ENCODE measurements at regions of chr22 and their contacts with region 1.

Region 1: GRCh38 chr22:50525390-50526068 is at the start of gene SCO2:
- DNase-seq: peak; percentile 95 to 99 (median 98)
- ATAC-seq: peak; percentile 71 to 79
- H3K4me3 Mint-ChIP-seq: peak within 1 kb of the TSS; percentile 72 to 91 (median 86)
- H3K27ac Mint-ChIP-seq: peak within 1 kb of the TSS; percentile 70 to 94 (median 88)
- H3K4me1 Mint-ChIP-seq: peaks cover 18 to 41% (median 33%) of the 10 kb centered on the region in 4 donors
- H3K27me3 Mint-ChIP-seq: peaks cover 0 to under 1% (median 0%) of the 10 kb centered on the region in 5 donors
- polyA plus RNA-seq, gene SCO2: 4.0 to 8.3 (median 6.8) TPM

Region 2: GRCh38 chr22:50399751-50400331 is 125.7 kb before region 1 on chr22:
- POLR2A ChIA-PET with region 1: no interaction called
- DNase-seq: peak in 3 of 10 donors; percentile 4 to 14 (median 12)
- ATAC-seq: peak; percentile 33 to 44
- H3K4me3 Mint-ChIP-seq: peak overlapping the region in 3 of 10 donors; percentile 6 to 41 (median 24)
- H3K27ac Mint-ChIP-seq: peak overlapping the region; percentile 68 to 90 (median 84)
- H3K4me1 Mint-ChIP-seq: peaks cover 21 to 50% (median 42%) of the 10 kb centered on the region in 4 donors
- H3K27me3 Mint-ChIP-seq: no peaks in the 10 kb centered on the region

Region 3: GRCh38 chr22:50444663-50445062 is 80.9 kb before region 1 on chr22:
- POLR2A ChIA-PET with region 1: interaction called, 15 read pairs
- DNase-seq: peak in 1 of 10 donors; percentile 35
- ATAC-seq: peak in 1 of 2 donors; percentile 15
- H3K4me3 Mint-ChIP-seq: peak overlapping the region in 8 of 10 donors; percentile 53 to 76 (median 72)
- H3K27ac Mint-ChIP-seq: peak overlapping the region; percentile 75 to 97 (median 92)
- H3K4me1 Mint-ChIP-seq: peaks cover 23 to 57% (median 40%) of the 10 kb centered on the region in 4 donors
- H3K27me3 Mint-ChIP-seq: no peaks in the 10 kb centered on the region

Region 4: GRCh38 chr22:50507991-50508884 is 17.3 kb before region 1 on chr22 and contains the start of gene NCAPH2:
- POLR2A ChIA-PET with region 1: interaction called, 128 read pairs
- DNase-seq: peak in 8 of 10 donors; percentile 95 to 98 (median 97)
- ATAC-seq: peak; percentile 73 to 77
- H3K4me3 Mint-ChIP-seq: peak within 1 kb of the TSS; percentile 90 to 96 (median 94)
- H3K27ac Mint-ChIP-seq: peak within 1 kb of the TSS; percentile 85 to 100 (median 96)
- H3K4me1 Mint-ChIP-seq: peaks cover 2 to 25% (median 16%) of the 10 kb centered on the region in 4 donors
- H3K27me3 Mint-ChIP-seq: no peaks in the 10 kb centered on the region
- polyA plus RNA-seq, gene NCAPH2: 34.8 to 41.5 (median 40.1) TPM

Region 5: DNA sequence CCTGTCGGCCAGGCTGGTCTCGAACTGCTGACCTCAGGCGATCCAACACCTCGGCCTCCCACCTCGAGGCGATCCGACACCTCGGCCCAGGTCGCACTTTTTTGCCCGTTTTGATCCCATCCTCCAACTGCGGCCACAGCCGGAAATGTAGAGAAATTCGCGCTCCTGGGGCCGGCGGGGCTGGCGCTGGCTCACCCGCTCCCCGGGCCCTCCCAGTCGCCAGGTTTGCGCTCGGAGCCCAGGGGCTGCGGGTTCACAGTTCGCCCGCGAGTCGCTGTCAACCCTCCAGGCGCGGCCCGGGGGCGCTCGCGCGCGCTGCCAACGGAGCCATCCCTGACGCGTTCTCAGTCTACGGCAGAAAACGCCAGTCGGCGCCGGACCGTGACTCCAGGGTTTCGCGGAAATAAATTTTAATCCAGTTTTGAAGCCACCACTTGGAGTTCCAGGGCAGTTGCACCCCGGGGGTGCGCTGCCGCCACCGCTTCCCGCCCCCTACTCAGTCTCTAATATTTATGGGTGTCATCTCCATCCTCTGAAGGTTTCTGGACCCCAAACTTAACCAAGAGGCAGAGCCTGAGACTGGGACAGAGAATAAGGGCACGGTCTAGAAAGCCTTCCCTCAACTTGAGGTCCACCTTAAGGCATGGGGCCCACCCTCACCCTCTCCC is 18.7 kb after region 1 on chr22:
- POLR2A ChIA-PET with region 1: interaction called, 121 read pairs
- DNase-seq: peak; percentile 65 to 84 (median 72)
- ATAC-seq: peak; percentile 53 to 58
- H3K4me3 Mint-ChIP-seq: peak overlapping the region; percentile 54 to 74 (median 66)
- H3K27ac Mint-ChIP-seq: peak overlapping the region in 9 of 10 donors; percentile 31 to 83 (median 73)
- H3K4me1 Mint-ChIP-seq: peaks cover 13 to 65% (median 35%) of the 10 kb centered on the region in 4 donors
- H3K27me3 Mint-ChIP-seq: no peaks in the 10 kb centered on the region

Region 6: GRCh38 chr22:50582562-50583293 is 57.2 kb after region 1 on chr22 and contains the start of gene CHKB:
- POLR2A ChIA-PET with region 1: interaction called, 13 read pairs
- DNase-seq: peak; percentile 96 to 99 (median 98)
- ATAC-seq: peak; percentile 92 to 94
- H3K4me3 Mint-ChIP-seq: peak within 1 kb of the TSS; percentile 84 to 98 (median 94)
- H3K27ac Mint-ChIP-seq: peak within 1 kb of the TSS; percentile 88 to 98 (median 96)
- H3K4me1 Mint-ChIP-seq: peaks cover 9 to 39% (median 31%) of the 10 kb centered on the region in 4 donors
- H3K27me3 Mint-ChIP-seq: no peaks in the 10 kb centered on the region
- polyA plus RNA-seq, gene CHKB: 23.0 to 26.9 (median 25.1) TPM